Activated CD4-positive, alpha-beta T cell treated with anti-CD3 and anti-CD28 coated beads, Interleukin-2, amount 10 ng/mL, durations not matched to agents 7 days and 5 days (primary cell): ENCODE measurements at regions of chr18 and their contacts with region 1.

Region 1: GRCh38 chr18:50356036-50356945 is 18.6 kb upstream of the SKA1 start:
- DNase-seq: no peak
- H3K4me3 Mint-ChIP-seq: no peak overlapping the region
- H3K27ac Mint-ChIP-seq: peak overlapping the region; percentile 48
- H3K4me1 Mint-ChIP-seq: peaks cover 14% of the 10 kb centered on the region
- H3K27me3 Mint-ChIP-seq: peaks cover 29% of the 10 kb centered on the region

Region 2: DNA sequence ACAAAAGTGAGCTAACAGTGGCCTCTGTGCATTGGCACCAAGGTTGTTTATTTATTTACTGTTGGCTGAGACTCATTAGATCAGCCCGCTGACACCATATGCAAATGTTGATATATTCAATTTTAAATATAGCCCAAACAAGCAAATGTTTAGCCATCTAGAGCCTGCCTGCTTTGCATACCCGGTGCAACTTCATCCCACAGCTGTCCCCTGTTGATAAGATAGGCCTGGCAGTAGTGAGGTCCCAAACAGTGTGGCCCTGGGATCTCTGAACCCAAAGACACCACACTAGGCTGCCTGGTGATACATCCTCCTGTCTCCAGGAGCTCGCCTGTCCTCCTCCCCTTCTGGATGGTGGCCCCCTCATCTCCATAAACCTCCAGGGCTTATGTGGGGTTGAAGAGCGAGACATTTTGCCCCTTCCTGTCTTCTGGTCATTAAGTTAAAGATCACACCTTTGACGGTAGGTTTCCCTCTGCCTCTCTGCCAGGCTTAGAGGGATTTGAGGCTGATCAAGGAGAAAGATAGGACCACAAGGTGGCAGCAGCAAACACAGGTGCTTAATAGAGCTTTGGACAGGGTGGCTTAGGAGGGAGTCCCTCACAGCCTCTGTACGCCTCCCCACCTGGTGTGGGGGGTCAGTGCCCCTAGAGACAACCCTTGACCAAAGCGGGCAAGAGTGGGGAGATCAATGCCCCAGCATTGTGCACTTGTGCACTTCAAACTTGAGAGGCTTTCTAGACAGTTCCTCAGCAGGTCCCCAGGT is 137.7 kb before region 1 on chr18:
- CTCF ChIA-PET with region 1: interaction called, 18 read pairs
- POLR2A ChIA-PET with region 1: no interaction called
- DNase-seq: peak; percentile 48
- H3K4me3 Mint-ChIP-seq: no peak overlapping the region
- H3K27ac Mint-ChIP-seq: no peak overlapping the region
- H3K4me1 Mint-ChIP-seq: no peaks in the 10 kb centered on the region
- H3K27me3 Mint-ChIP-seq: peaks cover 31% of the 10 kb centered on the region

Region 3: GRCh38 chr18:50281295-50281971 is 74.9 kb before region 1 on chr18 and contains the start of gene MBD1:
- CTCF ChIA-PET with region 1: interaction called, 12 read pairs
- POLR2A ChIA-PET with region 1: interaction called, 5 read pairs
- DNase-seq: peak; percentile 97
- H3K4me3 Mint-ChIP-seq: peak within 1 kb of the TSS; percentile 97
- H3K27ac Mint-ChIP-seq: peak within 1 kb of the TSS; percentile 95
- H3K4me1 Mint-ChIP-seq: peaks cover 49% of the 10 kb centered on the region
- H3K27me3 Mint-ChIP-seq: no peaks in the 10 kb centered on the region
- total RNA-seq, gene MBD1: 91.6 to 96.2 TPM

Region 4: GRCh38 chr18:50307738-50308470 is 48.4 kb before region 1 on chr18:
- CTCF ChIA-PET with region 1: interaction called, 11 read pairs
- POLR2A ChIA-PET with region 1: no interaction called
- DNase-seq: peak; percentile 96
- H3K4me3 Mint-ChIP-seq: peak overlapping the region; percentile 84
- H3K27ac Mint-ChIP-seq: peak overlapping the region; percentile 89
- H3K4me1 Mint-ChIP-seq: peaks cover 21% of the 10 kb centered on the region
- H3K27me3 Mint-ChIP-seq: peaks cover 42% of the 10 kb centered on the region

Region 5: GRCh38 chr18:50340078-50340477 is 16.2 kb before region 1 on chr18:
- CTCF ChIA-PET with region 1: interaction called, 12 read pairs
- POLR2A ChIA-PET with region 1: no interaction called
- DNase-seq: no peak
- H3K4me3 Mint-ChIP-seq: no peak overlapping the region
- H3K27ac Mint-ChIP-seq: no peak overlapping the region
- H3K4me1 Mint-ChIP-seq: no peaks in the 10 kb centered on the region
- H3K27me3 Mint-ChIP-seq: peaks cover 3% of the 10 kb centered on the region

Region 6: GRCh38 chr18:50374753-50375391 is 18.6 kb after region 1 on chr18 and contains the start of gene SKA1:
- CTCF ChIA-PET with region 1: interaction called, 11 read pairs
- POLR2A ChIA-PET with region 1: no interaction called
- DNase-seq: peak; percentile 92
- H3K4me3 Mint-ChIP-seq: peak within 1 kb of the TSS; percentile 91
- H3K27ac Mint-ChIP-seq: peak within 1 kb of the TSS; percentile 94
- H3K4me1 Mint-ChIP-seq: peaks cover 28% of the 10 kb centered on the region
- H3K27me3 Mint-ChIP-seq: peaks cover under 1% of the 10 kb centered on the region
- total RNA-seq, gene SKA1: 44.1 to 51.4 TPM

Region 7: DNA sequence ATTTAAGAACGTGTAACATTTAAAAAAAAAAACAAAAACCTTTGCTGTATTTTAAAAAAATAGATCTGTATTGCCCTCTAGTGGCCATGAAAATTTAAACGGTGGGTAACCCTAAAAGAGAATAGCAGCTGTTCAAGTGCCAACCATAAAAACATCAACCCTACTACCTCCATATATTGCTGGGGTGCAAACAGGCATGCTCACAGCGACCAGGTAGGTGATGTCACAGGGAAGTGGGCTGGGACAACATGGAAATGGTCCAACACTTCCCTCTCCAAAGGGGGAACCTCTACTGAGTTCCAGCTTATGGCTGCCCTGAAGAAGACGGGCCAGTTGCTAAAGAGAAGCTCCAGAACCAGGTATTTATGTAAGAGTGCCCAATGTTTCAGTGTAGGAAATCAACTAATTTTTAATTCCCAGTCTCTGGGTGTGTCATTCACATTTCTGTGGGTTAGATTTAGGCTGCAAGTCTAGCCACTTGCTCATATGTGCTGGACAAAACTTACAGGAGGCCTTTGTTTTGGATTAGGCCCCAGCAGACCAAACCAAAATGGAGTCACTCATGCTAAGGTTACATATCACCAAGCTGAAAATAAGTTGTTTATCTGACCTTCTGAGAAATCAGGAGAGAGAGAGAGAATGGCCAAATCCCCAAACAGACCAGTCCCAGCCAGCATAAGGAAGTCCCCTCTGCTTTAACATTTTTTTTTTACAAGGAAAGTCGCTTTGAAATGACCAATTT is 73.1 kb after region 1 on chr18:
- CTCF ChIA-PET with region 1: no interaction called
- POLR2A ChIA-PET with region 1: no interaction called
- DNase-seq: peak; percentile 31
- H3K4me3 Mint-ChIP-seq: no peak overlapping the region
- H3K27ac Mint-ChIP-seq: no peak overlapping the region
- H3K4me1 Mint-ChIP-seq: no peaks in the 10 kb centered on the region
- H3K27me3 Mint-ChIP-seq: peaks cover 21% of the 10 kb centered on the region